ENCODE measurements at regions of chr11 and their contacts with region 1.

Region 1: GRCh38 chr11:62905927-62906531 is 15.1 kb downstream of the CHRM1 start:
- DNase-seq: peak; percentile 81
- H3K4me3 ChIP-seq: no peak overlapping the region
- H3K27ac ChIP-seq: peak overlapping the region; percentile 34 to 81
- H3K4me1 ChIP-seq: peaks cover 15% of the 10 kb centered on the region
- H3K27me3 ChIP-seq: no peaks in the 10 kb centered on the region
- CTCF ChIP-seq: peak; percentile 96 to 99 (median 98)
- POLR2A ChIP-seq: no peak

Region 2: GRCh38 chr11:62841361-62842184 is 64.5 kb before region 1 on chr11:
- intact Hi-C with region 1: no loop called
- DNase-seq: peak; percentile 86
- H3K4me3 ChIP-seq: peak overlapping the region; percentile 60 to 61
- H3K27ac ChIP-seq: peak overlapping the region; percentile 98 to 99
- H3K4me1 ChIP-seq: peaks cover 12% of the 10 kb centered on the region
- H3K27me3 ChIP-seq: no peaks in the 10 kb centered on the region
- CTCF ChIP-seq: no peak
- POLR2A ChIP-seq: peak; percentile 90

Region 3: GRCh38 chr11:63023841-63024648 is 118.0 kb after region 1 on chr11:
- intact Hi-C with region 1: loop called (anchors 1 kb)
- DNase-seq: peak; percentile 86
- H3K4me3 ChIP-seq: no peak overlapping the region
- H3K27ac ChIP-seq: no peak overlapping the region
- H3K4me1 ChIP-seq: peaks cover 4% of the 10 kb centered on the region
- H3K27me3 ChIP-seq: no peaks in the 10 kb centered on the region
- CTCF ChIP-seq: peak; percentile 99 to 100 (median 100)
- POLR2A ChIP-seq: no peak